PC-9 (cell line): ENCODE measurements at regions of chr16 and their contacts with region 1.

Region 1: GRCh38 chr16:87874639-87875465 is 5.5 kb upstream of the SLC7A5 start:
- DNase-seq: no peak
- H3K4me3 ChIP-seq: no peak overlapping the region
- H3K27ac ChIP-seq: no peak overlapping the region
- H3K4me1 ChIP-seq: peaks cover 28% of the 10 kb centered on the region
- H3K27me3 ChIP-seq: no peaks in the 10 kb centered on the region
- CTCF ChIP-seq: no peak

Region 2: GRCh38 chr16:87698241-87698640 is 176.6 kb before region 1 on chr16:
- CTCF ChIA-PET with region 1: no interaction called
- POLR2A ChIA-PET with region 1: no interaction called
- intact Hi-C with region 1: no loop called
- DNase-seq: no peak
- H3K4me3 ChIP-seq: no peak overlapping the region
- H3K27ac ChIP-seq: no peak overlapping the region
- H3K4me1 ChIP-seq: no peaks in the 10 kb centered on the region
- H3K27me3 ChIP-seq: no peaks in the 10 kb centered on the region
- CTCF ChIP-seq: no peak

Region 3: GRCh38 chr16:87790278-87791032 is 84.4 kb before region 1 on chr16:
- CTCF ChIA-PET with region 1: no interaction called
- POLR2A ChIA-PET with region 1: interaction called, 33 read pairs
- intact Hi-C with region 1: no loop called
- DNase-seq: peak; percentile 39 to 76
- H3K4me3 ChIP-seq: no peak overlapping the region
- H3K27ac ChIP-seq: peak overlapping the region; percentile 77
- H3K4me1 ChIP-seq: peaks cover 38% of the 10 kb centered on the region
- H3K27me3 ChIP-seq: no peaks in the 10 kb centered on the region
- CTCF ChIP-seq: no peak

Region 4: DNA sequence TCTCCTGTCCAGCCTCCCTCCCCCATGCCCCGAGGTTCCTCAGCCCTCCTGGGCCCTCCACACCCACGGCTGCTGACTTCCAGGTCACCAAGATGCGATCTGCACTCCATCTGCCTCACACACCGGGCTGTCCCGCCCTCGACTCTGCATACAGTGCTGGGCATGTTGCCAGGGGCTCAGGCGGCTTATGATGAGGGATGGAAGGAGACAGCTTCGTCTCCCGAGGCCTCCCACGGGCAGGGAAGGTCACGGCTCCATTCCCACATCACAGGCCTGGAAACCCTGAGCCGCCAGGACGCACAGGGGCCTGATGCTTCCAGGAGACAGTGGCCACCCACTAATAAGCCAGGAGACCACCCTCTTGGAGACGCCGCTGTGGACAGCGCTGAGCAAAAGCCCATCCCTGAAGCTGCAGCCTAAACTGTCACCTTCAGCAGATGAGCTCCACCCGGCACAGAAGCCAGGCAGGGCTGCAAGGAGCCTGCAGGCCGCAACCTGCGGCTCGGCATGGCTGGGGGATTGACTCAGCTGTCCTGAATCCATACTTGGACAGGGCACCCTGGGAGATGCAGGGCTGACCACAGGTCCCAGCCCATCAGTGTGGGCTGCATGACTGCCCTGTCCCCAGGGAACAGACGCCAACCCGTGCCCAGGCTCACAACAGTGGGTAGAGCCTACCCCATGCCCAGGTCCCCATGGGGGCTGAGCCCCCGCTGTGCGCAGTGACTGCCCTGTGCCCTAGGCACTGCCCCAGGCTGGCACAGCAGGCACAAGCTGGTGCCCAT is 40.0 kb before region 1 on chr16:
- CTCF ChIA-PET with region 1: no interaction called
- POLR2A ChIA-PET with region 1: no interaction called
- intact Hi-C with region 1: no loop called
- DNase-seq: peak in 1 of 2 experiments; percentile 49
- H3K4me3 ChIP-seq: no peak overlapping the region
- H3K27ac ChIP-seq: no peak overlapping the region
- H3K4me1 ChIP-seq: no peaks in the 10 kb centered on the region
- H3K27me3 ChIP-seq: no peaks in the 10 kb centered on the region
- CTCF ChIP-seq: no peak

Region 5: DNA sequence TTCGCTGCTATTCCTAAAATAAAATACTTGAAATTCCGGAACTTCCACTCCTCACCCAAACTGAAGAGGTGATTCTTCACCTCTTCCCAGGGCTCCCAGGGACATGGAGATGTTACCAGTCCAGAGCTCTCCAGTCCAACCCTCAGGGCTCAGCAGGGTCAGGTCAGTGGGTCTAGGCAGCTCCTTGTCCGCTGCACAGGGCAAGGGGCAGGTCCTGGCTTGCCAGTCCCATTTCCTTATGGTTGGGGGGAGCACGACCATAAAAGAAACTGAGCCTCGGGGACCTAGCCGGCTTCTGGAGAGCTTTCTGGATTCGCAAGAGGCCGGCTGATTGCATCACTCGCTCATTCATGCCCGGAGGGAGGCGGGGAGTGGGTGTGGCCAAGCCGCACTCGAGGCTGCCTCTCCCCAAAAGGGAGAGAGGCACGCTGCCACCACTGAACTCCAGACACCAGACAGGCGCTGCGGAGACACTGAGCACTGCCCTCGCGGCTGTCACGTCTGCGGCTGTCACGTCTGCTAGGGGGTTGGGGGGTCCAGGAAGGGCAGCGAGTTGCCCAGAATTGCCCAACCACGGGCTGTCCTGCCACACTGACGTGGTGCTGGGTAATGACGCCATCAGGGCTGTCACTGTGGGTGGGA is 21.3 kb before region 1 on chr16:
- CTCF ChIA-PET with region 1: interaction called, 18 read pairs
- POLR2A ChIA-PET with region 1: interaction called, 5 read pairs
- intact Hi-C with region 1: loop called (anchors 1 kb)
- DNase-seq: peak; percentile 89 to 95
- H3K4me3 ChIP-seq: peak overlapping the region; percentile 58
- H3K27ac ChIP-seq: peak overlapping the region; percentile 99
- H3K4me1 ChIP-seq: peaks cover 50% of the 10 kb centered on the region
- H3K27me3 ChIP-seq: no peaks in the 10 kb centered on the region
- CTCF ChIP-seq: no peak

Region 6: GRCh38 chr16:87925299-87925670 is 50.4 kb after region 1 on chr16:
- CTCF ChIA-PET with region 1: no interaction called
- POLR2A ChIA-PET with region 1: interaction called, 13 read pairs
- intact Hi-C with region 1: no loop called
- DNase-seq: peak; percentile 72 to 74
- H3K4me3 ChIP-seq: no peak overlapping the region
- H3K27ac ChIP-seq: no peak overlapping the region
- H3K4me1 ChIP-seq: no peaks in the 10 kb centered on the region
- H3K27me3 ChIP-seq: peaks cover 5% of the 10 kb centered on the region; the same call in 1 of the 2 replicates
- CTCF ChIP-seq: no peak

Region 7: GRCh38 chr16:87950765-87951549 is 76.1 kb after region 1 on chr16 and contains the start of gene BANP:
- CTCF ChIA-PET with region 1: no interaction called
- POLR2A ChIA-PET with region 1: interaction called, 5 read pairs
- intact Hi-C with region 1: loop called (anchors 5 kb)
- DNase-seq: peak; percentile 98 to 99
- H3K4me3 ChIP-seq: peak within 1 kb of the TSS; percentile 96
- H3K27ac ChIP-seq: peak within 1 kb of the TSS; percentile 77
- H3K4me1 ChIP-seq: peaks cover 30% of the 10 kb centered on the region
- H3K27me3 ChIP-seq: no peaks in the 10 kb centered on the region
- CTCF ChIP-seq: peak; percentile 69
- total RNA-seq, gene BANP: 60.9 and 73.2 TPM in 2 replicates

Region 8: GRCh38 chr16:88640498-88641247 is 765.8 kb after region 1 on chr16:
- CTCF ChIA-PET with region 1: no interaction called
- POLR2A ChIA-PET with region 1: interaction called, 14 read pairs
- intact Hi-C with region 1: no loop called
- DNase-seq: no peak
- H3K4me3 ChIP-seq: no peak overlapping the region
- H3K27ac ChIP-seq: no peak overlapping the region
- H3K4me1 ChIP-seq: no peaks in the 10 kb centered on the region
- H3K27me3 ChIP-seq: 0 out of 2 replicates have a peak, but pooled peaks cover 5% of the 10 kb centered on the region
- CTCF ChIP-seq: no peak